Activated T-helper 1 cell treated with anti-CD3 and anti-CD28 coated beads, Interleukin-12 subunit alpha, Interleukin-12 subunit beta, Interleukin-2, Interleukin-4 antibody, amounts not matched to agents 30 ng/mL and 10 ng/mL and 1 ng/mL, durations not matched to agents 14 hours and 24 hours and 36 hours (primary cell): ENCODE measurements at regions of chr19 and their contacts with region 1.

Region 1: DNA sequence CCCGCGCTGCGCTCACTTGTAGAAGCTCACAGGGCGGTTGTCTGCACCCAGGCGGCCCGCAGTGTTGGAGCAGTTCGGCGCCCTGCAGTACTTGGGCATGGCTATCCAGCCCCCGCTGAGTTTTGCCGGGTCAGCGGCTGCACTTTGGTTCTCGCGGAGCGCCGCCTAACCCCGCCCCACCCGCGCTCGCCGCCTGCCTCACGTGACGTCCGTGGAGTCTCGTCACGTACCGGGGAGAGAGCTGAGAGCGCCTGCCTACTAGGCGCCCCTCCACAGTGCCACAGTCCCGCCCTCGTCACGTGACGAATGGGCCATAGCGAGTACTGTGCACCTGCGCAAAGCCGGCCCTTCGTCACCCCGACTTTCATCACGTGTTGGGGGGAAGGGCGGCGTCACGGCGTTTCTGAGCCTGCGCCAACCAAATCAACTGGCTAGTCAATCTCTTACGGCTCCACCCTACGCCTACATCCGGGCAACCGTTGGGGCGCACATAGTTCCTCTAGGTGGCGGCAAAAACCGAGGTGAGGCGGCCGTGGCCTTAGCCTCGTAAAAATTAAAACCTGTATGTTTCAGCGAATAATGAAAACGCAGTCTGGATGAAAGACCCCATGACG is at the start of gene THAP8:
- DNase-seq: peak; percentile 100
- H3K4me3 Mint-ChIP-seq: peak within 1 kb of the TSS; percentile 99
- H3K27ac Mint-ChIP-seq: peak within 1 kb of the TSS; percentile 96
- H3K4me1 Mint-ChIP-seq: peaks cover 45% of the 10 kb centered on the region
- H3K27me3 Mint-ChIP-seq: no peaks in the 10 kb centered on the region
- total RNA-seq, gene THAP8: 1.6 TPM in 2 replicates

Region 2: DNA sequence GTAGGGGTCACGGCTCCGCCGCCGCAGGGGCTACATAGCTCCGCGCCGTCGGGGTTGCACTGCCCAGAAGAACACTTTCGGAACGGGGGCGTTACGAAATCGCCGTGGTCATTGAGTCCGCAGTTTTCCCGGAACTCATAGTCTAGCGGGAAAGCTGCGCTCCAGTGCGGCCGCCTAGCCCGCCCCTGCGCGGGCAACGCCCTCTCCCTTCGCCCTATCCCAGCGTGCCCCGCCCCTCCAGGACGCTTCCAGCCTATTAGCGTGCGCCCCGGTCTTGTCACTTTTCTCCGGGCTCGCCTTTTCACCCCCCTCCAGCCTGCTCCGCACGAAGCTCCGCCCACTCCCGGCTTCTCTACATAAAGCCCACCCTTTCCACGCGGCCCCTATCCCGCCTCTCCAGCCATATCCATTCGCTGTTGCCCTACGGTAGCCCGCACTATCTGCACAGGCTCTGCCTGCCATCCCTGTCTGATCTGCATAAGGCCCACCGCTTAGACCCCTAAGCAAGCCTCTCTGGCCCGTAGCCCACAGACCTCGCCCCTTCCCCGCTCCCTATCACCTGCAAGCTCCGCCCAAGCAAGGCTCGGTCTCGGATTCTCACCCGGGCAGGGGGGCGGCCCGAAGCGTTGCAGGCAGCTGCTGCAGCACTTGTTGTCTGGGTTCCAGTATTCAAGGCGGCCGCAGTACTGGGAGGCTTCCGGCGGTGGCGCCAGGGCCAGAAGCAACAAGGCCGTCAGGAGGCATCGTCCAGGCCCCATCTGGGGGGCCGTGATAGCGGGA is 313.6 kb before region 1 on chr19:
- intact Hi-C with region 1: loop called (anchors 1 kb)
- DNase-seq: peak; percentile 95
- H3K4me3 Mint-ChIP-seq: peak overlapping the region; percentile 93
- H3K27ac Mint-ChIP-seq: peak overlapping the region; percentile 93
- H3K4me1 Mint-ChIP-seq: peaks cover 23% of the 10 kb centered on the region
- H3K27me3 Mint-ChIP-seq: peaks cover 2% of the 10 kb centered on the region

Region 3: GRCh38 chr19:35931161-35931873 is 122.9 kb before region 1 on chr19:
- intact Hi-C with region 1: loop called (anchors 1 kb)
- DNase-seq: peak; percentile 100
- H3K4me3 Mint-ChIP-seq: peak overlapping the region; percentile 70
- H3K27ac Mint-ChIP-seq: peak overlapping the region; percentile 81
- H3K4me1 Mint-ChIP-seq: peaks cover 30% of the 10 kb centered on the region
- H3K27me3 Mint-ChIP-seq: no peaks in the 10 kb centered on the region

Region 4: GRCh38 chr19:36014029-36014924 is 39.9 kb before region 1 on chr19 and contains the start of gene ALKBH6:
- intact Hi-C with region 1: loop called (anchors 1 kb)
- DNase-seq: peak; percentile 100
- H3K4me3 Mint-ChIP-seq: peak within 1 kb of the TSS; percentile 98
- H3K27ac Mint-ChIP-seq: peak within 1 kb of the TSS; percentile 96
- H3K4me1 Mint-ChIP-seq: peaks cover 46% of the 10 kb centered on the region
- H3K27me3 Mint-ChIP-seq: no peaks in the 10 kb centered on the region
- total RNA-seq, gene ALKBH6: 48.3 and 60.6 TPM in 2 replicates

Region 5: GRCh38 chr19:36114763-36115452 is 60.7 kb after region 1 on chr19 and contains the start of gene POLR2I:
- intact Hi-C with region 1: loop called (anchors 1 kb)
- DNase-seq: peak; percentile 98
- H3K4me3 Mint-ChIP-seq: peak within 1 kb of the TSS; percentile 98
- H3K27ac Mint-ChIP-seq: peak within 1 kb of the TSS; percentile 92
- H3K4me1 Mint-ChIP-seq: peaks cover 38% of the 10 kb centered on the region
- H3K27me3 Mint-ChIP-seq: peaks cover 1% of the 10 kb centered on the region
- total RNA-seq, gene POLR2I: 76.3 and 92.4 TPM in 2 replicates

Region 6: DNA sequence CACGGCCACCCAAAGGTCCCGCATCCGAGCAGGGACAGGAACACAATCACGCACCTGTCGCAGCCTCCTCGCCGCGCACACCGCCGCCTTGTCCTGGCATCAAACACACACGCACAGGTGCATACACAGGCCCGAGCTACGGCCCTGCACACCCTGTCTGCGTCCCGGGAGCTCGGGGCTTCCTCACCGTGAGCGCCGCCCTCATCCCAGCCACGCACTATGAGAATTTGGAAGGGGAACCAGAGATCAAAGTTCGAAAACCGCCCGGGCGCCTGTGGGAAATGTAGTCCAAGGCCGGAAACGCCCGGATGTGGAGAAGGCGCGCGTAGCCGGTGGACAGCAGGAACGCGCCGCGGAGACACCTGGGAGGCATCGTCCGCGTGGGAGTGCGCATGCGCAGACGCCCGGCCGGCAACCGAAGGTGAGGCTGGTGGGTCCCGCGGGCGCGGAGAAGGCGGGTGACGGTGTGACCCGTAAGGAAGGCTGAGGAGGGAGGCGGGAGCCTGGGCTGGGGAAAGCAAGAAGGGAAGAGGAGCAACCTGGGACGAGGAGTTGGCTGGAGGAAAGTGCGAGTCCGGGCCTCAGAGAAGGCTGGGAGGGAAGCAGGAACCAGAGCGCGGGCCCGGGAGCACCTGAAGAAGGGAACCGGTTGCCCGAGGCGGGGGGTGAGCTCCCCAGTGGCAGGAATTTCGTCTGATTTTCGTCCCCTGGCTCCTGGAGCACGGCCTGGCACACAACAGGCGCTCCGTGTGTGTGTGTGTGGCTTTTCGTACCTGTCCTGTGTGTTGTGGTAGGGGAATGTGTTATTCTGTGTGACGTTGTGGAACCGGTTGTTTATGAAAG is 633.2 kb after region 1 on chr19 and contains the start of gene ZNF567:
- intact Hi-C with region 1: loop called (anchors 1 kb)
- DNase-seq: peak; percentile 97
- H3K4me3 Mint-ChIP-seq: peak within 1 kb of the TSS; percentile 95
- H3K27ac Mint-ChIP-seq: peak within 1 kb of the TSS; percentile 91
- H3K4me1 Mint-ChIP-seq: peaks cover 24% of the 10 kb centered on the region
- H3K27me3 Mint-ChIP-seq: peaks cover 2% of the 10 kb centered on the region
- total RNA-seq, gene ZNF567: 5.8 and 8.5 TPM in 2 replicates